HCT116 (cell line): ENCODE measurements at regions of chr15 and their contacts with region 1.

Region 1: GRCh38 chr15:68924866-68925560 is 5.3 kb upstream of the SPESP1 start:
- DNase-seq: peak; percentile 66
- ATAC-seq: peak; percentile 96
- H3K4me3 ChIP-seq: peak overlapping the region; percentile 16 to 19; a peak in 1 of 4 replicates
- H3K27ac ChIP-seq: no peak overlapping the region
- H3K4me1 ChIP-seq: peaks cover 3 to 4% of the 10 kb centered on the region in 2 experiments; a peak in 1 of 4 replicates
- H3K27me3 ChIP-seq: no peaks in the 10 kb centered on the region
- CTCF ChIP-seq: peak; percentile 80 to 96 (median 91)
- POLR2A ChIP-seq: no peak
- RAD21 ChIP-seq: peak; percentile 94

Region 2: GRCh38 chr15:68252925-68253534 is 672.0 kb before region 1 on chr15:
- CTCF ChIA-PET with region 1: interaction called, 10 read pairs
- POLR2A ChIA-PET with region 1: interaction called, 3 read pairs
- RAD21 ChIA-PET with region 1: interaction called in 1 of 2 experiments, 4 read pairs
- intact Hi-C with region 1: no loop called
- DNase-seq: peak; percentile 79
- ATAC-seq: peak; percentile 97
- H3K4me3 ChIP-seq: no peak overlapping the region
- H3K27ac ChIP-seq: no peak overlapping the region
- H3K4me1 ChIP-seq: no peaks in the 10 kb centered on the region
- H3K27me3 ChIP-seq: no peaks in the 10 kb centered on the region
- CTCF ChIP-seq: peak; percentile 78 to 88 (median 87)
- POLR2A ChIP-seq: no peak
- RAD21 ChIP-seq: peak; percentile 90

Region 3: DNA sequence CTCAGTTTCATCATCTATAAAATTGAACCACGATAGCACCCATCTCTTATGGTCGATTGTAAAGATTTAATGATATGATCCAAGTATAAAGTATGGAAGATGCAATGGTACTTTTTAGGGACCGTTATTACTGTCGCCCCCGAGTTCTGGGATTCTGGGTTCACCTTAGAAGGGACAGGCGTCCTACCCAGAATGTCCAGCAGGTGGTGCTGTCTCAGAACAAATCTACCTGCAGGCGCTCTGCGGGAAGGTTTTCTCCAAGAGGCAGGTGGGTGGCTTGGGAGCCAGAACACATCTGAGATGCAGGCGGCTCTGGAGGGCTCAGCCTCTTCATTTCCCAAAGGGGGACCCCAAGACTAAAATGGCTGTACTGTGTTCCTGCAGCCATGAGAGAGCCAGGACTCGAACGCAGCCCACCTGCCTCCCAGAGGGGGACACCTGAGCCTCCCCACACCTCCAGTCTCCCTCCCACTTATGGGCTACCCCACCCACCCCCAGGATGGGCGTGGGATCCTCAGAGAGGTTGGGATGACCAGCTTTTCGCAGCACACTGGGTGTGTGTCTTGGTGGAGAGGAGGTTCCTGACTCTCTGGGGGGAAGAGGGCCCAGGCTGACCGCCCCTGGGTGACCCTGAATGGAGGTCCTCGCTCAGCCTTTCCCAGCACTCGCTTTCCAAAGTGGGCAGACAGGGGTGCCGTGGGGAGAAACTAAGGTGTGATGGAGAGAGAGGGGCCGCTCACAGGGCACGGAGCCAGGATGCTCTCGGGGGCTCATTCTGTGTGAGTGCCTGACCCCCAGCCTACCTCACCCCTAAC is 374.3 kb before region 1 on chr15:
- CTCF ChIA-PET with region 1: interaction called, 55 read pairs
- POLR2A ChIA-PET with region 1: no interaction called
- RAD21 ChIA-PET with region 1: interaction called, 5 to 6 read pairs
- intact Hi-C with region 1: loop called (anchors 1 kb)
- DNase-seq: peak; percentile 48
- ATAC-seq: peak; percentile 81
- H3K4me3 ChIP-seq: no peak overlapping the region
- H3K27ac ChIP-seq: no peak overlapping the region
- H3K4me1 ChIP-seq: no peaks in the 10 kb centered on the region
- H3K27me3 ChIP-seq: peaks cover 11% of the 10 kb centered on the region
- CTCF ChIP-seq: peak; percentile 83 to 90 (median 89)
- POLR2A ChIP-seq: no peak
- RAD21 ChIP-seq: peak; percentile 84

Region 4: GRCh38 chr15:68672781-68673205 is 252.2 kb before region 1 on chr15:
- CTCF ChIA-PET with region 1: interaction called, 24 read pairs
- POLR2A ChIA-PET with region 1: no interaction called
- RAD21 ChIA-PET with region 1: interaction called in 1 of 2 experiments, 3 read pairs
- intact Hi-C with region 1: loop called (anchors 5 kb)
- DNase-seq: no peak
- ATAC-seq: no peak
- H3K4me3 ChIP-seq: no peak overlapping the region
- H3K27ac ChIP-seq: no peak overlapping the region
- H3K4me1 ChIP-seq: peaks cover 0 to 18% of the 10 kb centered on the region in 2 experiments; a peak in 2 of 4 replicates
- H3K27me3 ChIP-seq: no peaks in the 10 kb centered on the region
- CTCF ChIP-seq: peak in 2 of 3 experiments; percentile 21 to 27; a peak in 2 of 6 replicates
- POLR2A ChIP-seq: no peak
- RAD21 ChIP-seq: peak; percentile 52

Region 5: DNA sequence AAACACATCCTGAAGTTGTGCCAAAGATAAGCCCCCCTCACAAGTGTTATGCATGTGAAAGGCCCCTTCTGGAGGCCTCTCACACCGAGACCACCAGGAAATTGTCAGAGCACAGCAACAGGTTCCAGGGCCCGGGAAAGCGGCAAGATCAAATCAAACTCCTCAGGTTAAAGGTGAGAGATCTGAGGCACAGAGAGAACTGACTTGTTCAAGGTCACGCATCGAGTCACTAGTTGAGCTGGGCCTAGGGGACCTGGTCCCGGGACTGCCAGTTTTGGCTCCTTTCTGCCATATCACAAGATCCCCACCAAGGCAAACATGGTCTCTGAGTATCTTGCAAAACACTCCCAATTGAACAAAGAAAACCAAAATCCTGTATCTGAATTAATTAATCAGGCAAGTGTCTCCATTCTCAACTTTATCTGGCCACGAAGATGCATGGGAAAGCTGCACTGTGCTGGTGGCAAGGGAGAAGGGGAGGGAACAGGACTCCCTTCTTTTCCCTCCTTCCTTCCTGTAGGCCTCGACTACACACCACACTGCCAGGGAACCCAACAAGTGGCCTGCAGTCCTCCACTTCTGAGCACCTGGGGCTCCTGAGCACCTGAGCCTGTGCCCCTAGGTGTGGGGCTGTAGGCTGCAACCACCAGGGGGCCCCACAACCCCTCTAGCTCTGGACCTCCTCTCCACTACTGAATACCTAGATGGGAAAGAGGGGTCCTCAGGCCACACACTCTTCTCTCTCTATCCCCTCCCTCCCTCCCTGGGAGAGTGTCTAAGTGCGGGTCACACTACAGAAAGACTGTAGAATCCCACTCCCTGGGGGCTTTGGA is 141.6 kb before region 1 on chr15:
- CTCF ChIA-PET with region 1: interaction called, 17 read pairs
- POLR2A ChIA-PET with region 1: no interaction called
- RAD21 ChIA-PET with region 1: interaction called in 1 of 2 experiments, 4 read pairs
- intact Hi-C with region 1: no loop called
- DNase-seq: peak; percentile 8
- ATAC-seq: peak; percentile 96
- H3K4me3 ChIP-seq: no peak overlapping the region
- H3K27ac ChIP-seq: no peak overlapping the region
- H3K4me1 ChIP-seq: no peaks in the 10 kb centered on the region
- H3K27me3 ChIP-seq: no peaks in the 10 kb centered on the region
- CTCF ChIP-seq: peak; percentile 42 to 80 (median 71); a peak in 5 of 6 replicates
- POLR2A ChIP-seq: no peak
- RAD21 ChIP-seq: peak; percentile 59

Region 6: GRCh38 chr15:68935400-68935937 is 10.5 kb after region 1 on chr15:
- CTCF ChIA-PET with region 1: interaction called, 10 read pairs
- POLR2A ChIA-PET with region 1: no interaction called
- RAD21 ChIA-PET with region 1: no interaction called
- intact Hi-C with region 1: no loop called
- DNase-seq: no peak
- ATAC-seq: no peak
- H3K4me3 ChIP-seq: no peak overlapping the region
- H3K27ac ChIP-seq: no peak overlapping the region
- H3K4me1 ChIP-seq: no peaks in the 10 kb centered on the region
- H3K27me3 ChIP-seq: no peaks in the 10 kb centered on the region
- CTCF ChIP-seq: no peak
- POLR2A ChIP-seq: no peak
- RAD21 ChIP-seq: no peak